ENCODE measurements at regions of chr10 and their contacts with region 1.

Region 1: DNA sequence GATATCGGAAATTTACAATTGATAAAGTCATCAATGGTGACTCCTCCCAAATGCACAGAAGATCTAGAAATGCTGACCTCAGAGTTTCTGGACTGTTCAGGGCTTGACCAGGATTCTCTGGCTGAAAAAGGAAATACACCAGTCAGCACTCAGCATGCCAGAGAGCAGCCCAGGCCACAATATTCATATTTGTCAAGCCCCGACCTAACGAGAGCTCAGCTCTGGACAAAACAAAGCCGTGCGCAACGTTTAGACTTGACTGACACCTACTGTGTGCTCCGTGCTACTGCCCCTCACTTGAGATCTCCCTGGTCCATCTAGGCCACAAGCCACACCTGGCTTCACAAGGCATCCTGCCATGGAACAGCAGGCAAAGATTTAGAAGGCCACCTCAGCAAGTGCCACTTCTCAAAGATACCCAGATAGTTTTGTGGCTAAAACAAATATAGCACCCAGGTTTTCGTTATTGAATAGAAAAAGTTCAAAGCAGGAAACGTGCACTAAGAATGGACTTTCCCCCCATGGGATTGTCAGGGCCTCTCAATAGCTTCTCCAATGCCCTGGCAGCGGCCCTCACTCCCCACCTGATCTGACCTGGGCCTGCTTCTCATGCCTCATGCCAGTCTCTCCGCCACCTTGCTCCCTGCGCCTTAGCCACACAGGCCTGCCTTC is 218.3 kb downstream of the FAM107B start:
- DNase-seq: peak in 13 of 35 experiments; percentile 24 to 65 (median 36)
- ATAC-seq: peak in 3 of 4 experiments; percentile 8 to 29 (median 20)
- H3K4me3 ChIP-seq: no peak overlapping the region
- H3K4me3 Mint-ChIP-seq: peak overlapping the region; percentile 50 to 85 (median 61)
- H3K27ac ChIP-seq: peak overlapping the region; percentile 76
- H3K27ac Mint-ChIP-seq: peak overlapping the region; percentile 94 to 95
- H3K4me1 ChIP-seq: peaks cover 66 to 87% of the 10 kb centered on the region in 2 experiments
- H3K4me1 Mint-ChIP-seq: peaks cover 96 to 97% (median 97%) of the 10 kb centered on the region in 3 donors
- H3K27me3 ChIP-seq: no peaks in the 10 kb centered on the region
- H3K27me3 Mint-ChIP-seq: no peaks in the 10 kb centered on the region

Region 2: DNA sequence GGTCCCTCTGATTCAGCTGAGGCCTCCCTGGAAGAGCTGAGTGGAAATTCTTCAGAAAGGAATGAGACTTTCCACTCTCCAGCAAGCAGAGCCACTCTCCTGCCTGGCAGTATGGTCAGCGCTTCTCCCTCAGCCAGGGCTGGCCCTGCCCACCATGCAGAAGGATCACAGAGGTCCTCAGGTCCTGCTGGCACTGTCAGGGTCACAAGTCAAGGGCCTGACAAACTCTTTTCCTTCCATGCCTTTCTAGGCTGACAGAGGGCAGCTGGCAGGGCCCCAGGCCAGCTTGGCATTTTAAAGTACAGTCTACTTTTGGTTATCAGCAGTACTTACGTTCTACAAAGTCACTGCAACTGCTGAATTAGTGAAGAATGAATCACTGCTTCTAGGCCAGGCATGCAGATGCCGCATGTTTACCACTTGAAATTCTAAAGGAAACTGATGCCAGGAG is 106.4 kb before region 1 on chr10:
- CTCF ChIA-PET with region 1: no interaction called
- POLR2A ChIA-PET with region 1: no interaction called
- DNase-seq: no peak
- ATAC-seq: no peak
- H3K4me3 ChIP-seq: no peak overlapping the region
- H3K4me3 Mint-ChIP-seq: no peak overlapping the region
- H3K27ac ChIP-seq: no peak overlapping the region
- H3K27ac Mint-ChIP-seq: no peak overlapping the region
- H3K4me1 ChIP-seq: no peaks in the 10 kb centered on the region
- H3K4me1 Mint-ChIP-seq: no peaks in the 10 kb centered on the region
- H3K27me3 ChIP-seq: peaks cover 0 to 7% of the 10 kb centered on the region in 2 experiments
- H3K27me3 Mint-ChIP-seq: peaks cover 0 to 8% of the 10 kb centered on the region in 2 donors

Region 3: DNA sequence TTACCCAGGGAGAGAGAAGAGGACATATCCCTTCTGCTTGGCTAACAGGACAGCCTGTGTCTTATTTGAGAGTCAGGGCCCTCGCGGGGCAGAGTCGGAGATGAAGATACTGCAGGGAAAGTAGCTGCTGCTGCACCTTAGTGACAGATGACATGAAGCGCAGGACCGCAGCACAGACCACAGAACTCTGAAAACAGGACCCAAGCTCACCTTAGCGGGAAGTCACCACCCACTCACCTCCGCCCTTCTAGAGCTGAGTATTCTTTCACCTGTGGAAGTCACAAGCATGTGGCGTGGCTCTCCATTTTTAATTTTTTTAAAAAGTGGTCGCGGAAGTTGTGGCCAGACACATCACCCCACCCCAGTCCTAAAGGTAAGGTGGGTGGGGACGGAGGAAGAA is 26.8 kb after region 1 on chr10:
- CTCF ChIA-PET with region 1: interaction called in 1 of 2 experiments, 11 read pairs
- POLR2A ChIA-PET with region 1: interaction called in 1 of 2 experiments, 24 read pairs
- DNase-seq: peak; percentile 56 to 94 (median 84)
- ATAC-seq: peak; percentile 75 to 90 (median 88)
- H3K4me3 ChIP-seq: no peak overlapping the region
- H3K4me3 Mint-ChIP-seq: peak overlapping the region; percentile 61 to 72 (median 71)
- H3K27ac ChIP-seq: peak overlapping the region; percentile 95
- H3K27ac Mint-ChIP-seq: peak overlapping the region; percentile 92 to 99
- H3K4me1 ChIP-seq: peaks cover 61 to 87% of the 10 kb centered on the region in 2 experiments
- H3K4me1 Mint-ChIP-seq: peaks cover 94 to 97% (median 94%) of the 10 kb centered on the region in 3 donors
- H3K27me3 ChIP-seq: no peaks in the 10 kb centered on the region
- H3K27me3 Mint-ChIP-seq: no peaks in the 10 kb centered on the region

Region 4: DNA sequence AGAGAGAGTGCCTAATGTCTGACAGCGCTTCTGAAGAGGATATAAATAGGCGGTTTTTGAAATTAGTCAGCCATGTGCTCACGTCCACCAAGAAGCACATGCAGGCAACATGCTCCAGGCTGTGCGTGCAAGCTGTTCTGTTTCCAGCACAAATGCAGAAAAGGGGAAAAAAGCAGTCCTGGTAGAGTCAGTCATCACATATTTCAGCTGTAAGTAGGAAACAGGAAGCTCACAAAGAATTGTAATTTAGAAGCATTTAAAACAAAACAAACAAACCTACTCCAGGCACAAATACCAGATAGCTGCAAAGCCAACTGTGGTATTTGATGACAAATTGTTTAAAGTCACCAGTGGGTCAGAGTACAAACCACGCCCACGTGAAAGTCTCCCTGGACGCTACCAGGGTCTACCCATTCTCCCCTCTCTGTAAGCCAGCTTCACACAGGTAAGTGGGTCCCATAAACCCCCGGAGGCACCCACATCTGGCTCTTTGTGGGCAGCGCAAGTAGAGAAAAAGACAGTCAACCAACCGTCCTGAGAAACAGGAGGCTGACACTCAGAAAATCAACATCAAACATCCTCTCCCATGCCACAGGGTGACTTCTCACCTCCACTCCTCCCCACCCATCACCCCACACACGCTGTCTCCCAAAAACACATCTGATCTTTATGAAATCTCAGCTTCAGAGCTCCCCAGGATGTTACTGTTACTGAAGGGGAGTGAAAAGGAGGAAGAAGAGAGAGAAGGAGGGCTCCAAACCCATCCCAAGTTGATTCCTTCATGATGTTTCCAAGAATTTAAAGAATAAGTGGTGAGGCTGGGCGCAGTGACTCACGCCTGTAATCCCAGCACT is 31.9 kb after region 1 on chr10:
- CTCF ChIA-PET with region 1: interaction called, 3 to 11 read pairs
- POLR2A ChIA-PET with region 1: interaction called, 6 to 24 read pairs
- DNase-seq: peak in 4 of 35 experiments; percentile 20 to 72 (median 22)
- ATAC-seq: peak; percentile 3 to 36 (median 28)
- H3K4me3 ChIP-seq: peak overlapping the region; percentile 4 to 33
- H3K4me3 Mint-ChIP-seq: peak overlapping the region; percentile 61 to 70 (median 69)
- H3K27ac ChIP-seq: peak overlapping the region; percentile 95
- H3K27ac Mint-ChIP-seq: peak overlapping the region; percentile 92 to 99
- H3K4me1 ChIP-seq: peaks cover 57 to 74% of the 10 kb centered on the region in 2 experiments
- H3K4me1 Mint-ChIP-seq: peaks cover 93 to 97% (median 95%) of the 10 kb centered on the region in 3 donors
- H3K27me3 ChIP-seq: no peaks in the 10 kb centered on the region
- H3K27me3 Mint-ChIP-seq: no peaks in the 10 kb centered on the region

Region 5: GRCh38 chr10:14625192-14625631 is 68.8 kb after region 1 on chr10:
- CTCF ChIA-PET with region 1: no interaction called
- POLR2A ChIA-PET with region 1: interaction called, 5 to 10 read pairs
- DNase-seq: no peak
- ATAC-seq: no peak
- H3K4me3 ChIP-seq: no peak overlapping the region
- H3K4me3 Mint-ChIP-seq: no peak overlapping the region
- H3K27ac ChIP-seq: no peak overlapping the region
- H3K27ac Mint-ChIP-seq: no peak overlapping the region
- H3K4me1 ChIP-seq: peaks cover 0 to 3% of the 10 kb centered on the region in 2 experiments
- H3K4me1 Mint-ChIP-seq: peaks cover 4 to 23% (median 13%) of the 10 kb centered on the region in 3 donors
- H3K27me3 ChIP-seq: no peaks in the 10 kb centered on the region
- H3K27me3 Mint-ChIP-seq: no peaks in the 10 kb centered on the region

Region 6: DNA sequence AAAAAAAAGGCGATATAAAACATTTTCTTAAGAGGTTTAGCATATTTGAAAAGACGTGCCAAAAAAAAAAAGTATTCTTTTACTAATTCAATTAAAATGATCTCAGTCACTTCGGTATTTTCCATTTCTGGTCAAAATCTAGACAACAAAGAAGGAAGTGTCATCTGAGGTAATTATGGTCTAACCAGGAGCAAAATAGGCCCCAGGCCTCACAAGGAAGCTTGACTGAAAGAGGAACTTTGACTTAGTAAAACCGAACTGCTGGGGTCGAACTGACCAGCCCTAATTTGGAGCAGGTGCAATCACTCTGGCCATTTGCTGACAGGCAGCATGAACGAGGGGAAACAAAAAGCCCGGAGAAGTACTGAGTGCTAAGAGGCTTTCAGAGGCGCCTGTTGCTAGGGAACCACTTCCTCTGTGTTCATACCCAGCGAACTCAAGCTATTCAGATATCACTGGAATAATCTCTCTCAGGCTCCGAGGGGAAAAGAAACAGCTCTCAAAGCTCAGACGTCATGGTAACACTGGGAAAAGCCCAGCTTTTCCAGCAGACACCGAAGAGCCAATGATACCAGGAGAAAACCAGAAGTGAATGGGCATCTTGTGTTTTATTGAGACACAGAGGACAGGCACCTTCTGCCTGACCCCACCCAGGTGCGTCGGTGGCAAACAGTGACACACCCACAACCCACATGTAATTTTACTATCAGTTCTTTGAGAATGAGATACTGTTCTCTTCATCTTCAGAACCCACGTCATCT is 91.8 kb after region 1 on chr10:
- CTCF ChIA-PET with region 1: interaction called, 3 read pairs
- POLR2A ChIA-PET with region 1: interaction called, 4 to 10 read pairs
- DNase-seq: peak; percentile 39 to 88 (median 69)
- ATAC-seq: peak; percentile 87 to 95 (median 92)
- H3K4me3 ChIP-seq: peak overlapping the region; percentile 39 to 75
- H3K4me3 Mint-ChIP-seq: peak overlapping the region; percentile 78 to 85 (median 79)
- H3K27ac ChIP-seq: peak overlapping the region; percentile 99
- H3K27ac Mint-ChIP-seq: peak overlapping the region; percentile 96 to 99
- H3K4me1 ChIP-seq: peaks cover 32 to 48% of the 10 kb centered on the region in 2 experiments
- H3K4me1 Mint-ChIP-seq: peaks cover 61 to 82% (median 81%) of the 10 kb centered on the region in 3 donors
- H3K27me3 ChIP-seq: no peaks in the 10 kb centered on the region
- H3K27me3 Mint-ChIP-seq: no peaks in the 10 kb centered on the region